Sigmoid colon (tissue), 7 donors: ENCODE measurements at regions of chr2 and their contacts with region 1.

Region 1: GRCh38 chr2:28392297-28393113 is at the start of gene FOSL2:
- DNase-seq: peak; percentile 99
- H3K4me3 ChIP-seq: peak within 1 kb of the TSS; percentile 96 to 99 (median 98)
- H3K27ac ChIP-seq: peak within 1 kb of the TSS; percentile 97 to 100 (median 100)
- H3K4me1 ChIP-seq: peaks cover 0 to 28% (median 19%) of the 10 kb centered on the region in 4 donors
- H3K27me3 ChIP-seq: no peaks in the 10 kb centered on the region
- CTCF ChIP-seq: no peak
- EP300 ChIP-seq: peak; percentile 76 to 98 (median 85)
- POLR2A ChIP-seq: peak; percentile 98 to 99
- total RNA-seq, gene FOSL2: 38.9 to 208 (median 67.3) TPM

Region 2: DNA sequence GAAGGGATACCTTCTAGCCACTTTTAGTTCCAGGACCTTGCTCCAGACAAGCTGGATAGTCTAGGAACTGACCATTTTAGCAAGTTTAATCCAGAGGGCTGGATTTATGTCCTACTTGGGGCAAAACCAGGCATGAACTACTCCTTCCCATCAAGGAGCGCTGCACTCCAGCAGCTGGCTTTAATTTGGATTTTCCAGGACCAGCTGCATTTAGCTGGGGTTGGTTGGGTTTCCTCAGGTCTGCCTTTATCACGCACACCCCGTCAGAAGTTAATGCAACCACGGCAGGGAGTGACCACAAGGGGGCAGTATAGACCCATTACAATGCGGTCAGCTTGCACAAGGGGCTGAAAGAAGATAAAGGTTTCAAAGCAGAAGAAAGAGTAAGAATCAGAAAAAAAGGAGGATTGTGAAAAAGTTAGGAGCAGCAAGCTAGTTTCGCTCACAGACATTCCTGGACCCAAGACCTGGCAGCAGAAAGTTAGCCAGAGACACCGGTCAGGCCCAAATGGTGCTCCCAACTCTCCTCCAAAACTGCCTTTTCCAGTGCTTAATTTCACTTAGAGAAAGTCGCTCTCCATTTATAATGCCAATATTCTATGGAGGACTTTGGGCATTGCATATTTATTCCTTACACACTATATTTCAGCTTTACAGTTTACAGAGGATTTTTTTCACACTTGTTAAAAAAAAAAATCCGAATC is 688.7 kb before region 1 on chr2:
- intact Hi-C with region 1: loop called (anchors 5 kb)
- DNase-seq: peak; percentile 90
- H3K4me3 ChIP-seq: no peak overlapping the region
- H3K27ac ChIP-seq: peak overlapping the region in 3 of 4 donors; percentile 80 to 88 (median 85)
- H3K4me1 ChIP-seq: peaks cover 0 to 33% (median 17%) of the 10 kb centered on the region in 4 donors
- H3K27me3 ChIP-seq: no peaks in the 10 kb centered on the region
- CTCF ChIP-seq: peak; percentile 85 to 88 (median 87)
- EP300 ChIP-seq: no peak
- POLR2A ChIP-seq: no peak

Region 3: DNA sequence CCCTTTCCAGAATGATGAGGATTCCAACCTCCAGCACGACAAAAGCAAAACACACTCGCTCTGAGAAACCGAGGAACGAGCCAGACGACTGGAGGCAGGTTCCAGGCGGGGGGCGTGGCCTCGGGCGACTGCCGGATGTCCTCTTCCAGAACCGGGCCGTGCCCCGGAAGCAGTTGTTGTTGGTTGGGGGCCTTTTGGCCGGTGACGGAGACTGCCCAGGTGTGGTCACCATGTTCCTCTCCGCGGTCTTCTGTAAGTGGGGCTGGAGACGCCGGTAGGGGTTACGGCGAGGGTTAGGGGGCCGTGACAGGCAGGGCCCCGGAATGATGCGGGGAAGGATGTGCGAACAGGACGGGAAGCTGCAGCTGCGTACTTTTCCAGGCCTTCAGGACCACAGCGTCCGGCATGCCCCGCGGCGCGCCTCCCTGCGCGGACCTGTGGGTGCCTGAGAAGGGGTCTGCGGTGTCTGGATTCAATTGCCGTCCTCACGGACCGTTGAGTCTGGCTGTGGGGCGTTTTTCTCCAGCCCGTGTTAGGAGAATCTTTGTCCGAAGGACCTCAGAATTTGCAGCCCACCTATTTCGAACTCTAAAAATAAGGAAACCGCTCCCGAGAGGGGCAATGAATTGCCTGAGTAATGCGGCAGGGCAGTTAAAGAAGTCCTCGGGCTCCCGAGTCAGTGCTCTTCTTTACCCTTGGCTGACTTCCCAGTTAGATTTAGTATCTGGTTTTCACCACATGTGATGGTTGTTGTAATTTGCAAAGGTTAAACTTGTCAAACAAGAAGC is 620.8 kb before region 1 on chr2 and contains the start of gene MRPL33:
- intact Hi-C with region 1: loop called (anchors 2 kb)
- DNase-seq: peak; percentile 98
- H3K4me3 ChIP-seq: peak within 1 kb of the TSS; percentile 58 to 91 (median 73)
- H3K27ac ChIP-seq: peak within 1 kb of the TSS; percentile 84 to 96 (median 94)
- H3K4me1 ChIP-seq: peaks cover 0 to 52% (median 45%) of the 10 kb centered on the region in 4 donors
- H3K27me3 ChIP-seq: no peaks in the 10 kb centered on the region
- CTCF ChIP-seq: no peak
- EP300 ChIP-seq: peak in 1 of 4 donors; percentile 69
- POLR2A ChIP-seq: peak; percentile 71 to 86
- total RNA-seq, gene MRPL33: 178 to 324 (median 239) TPM

Region 4: GRCh38 chr2:27890146-27890923 is 502.2 kb before region 1 on chr2 and contains the starts of genes BABAM2 and RBKS:
- intact Hi-C with region 1: loop called (anchors 1 kb)
- DNase-seq: peak; percentile 93
- H3K4me3 ChIP-seq: peak within 1 kb of the TSS; percentile 64 to 77 (median 70)
- H3K27ac ChIP-seq: peak within 1 kb of the TSS; percentile 91 to 97 (median 94)
- H3K4me1 ChIP-seq: peaks cover 0 to 28% (median 19%) of the 10 kb centered on the region in 4 donors
- H3K27me3 ChIP-seq: no peaks in the 10 kb centered on the region
- CTCF ChIP-seq: no peak
- EP300 ChIP-seq: peak in 2 of 4 donors; percentile 68 to 97
- POLR2A ChIP-seq: peak; percentile 46 to 76
- total RNA-seq, gene BABAM2: 24.4 to 52.3 (median 31.2) TPM
- total RNA-seq, gene RBKS: 0.55 to 3.1 (median 1.9) TPM

Region 5: GRCh38 chr2:27954771-27955383 is 437.6 kb before region 1 on chr2:
- intact Hi-C with region 1: loop called (anchors 5 kb)
- DNase-seq: peak; percentile 80
- H3K4me3 ChIP-seq: no peak overlapping the region
- H3K27ac ChIP-seq: peak overlapping the region; percentile 47 to 73 (median 66)
- H3K4me1 ChIP-seq: peaks cover 0 to 48% (median 34%) of the 10 kb centered on the region in 4 donors
- H3K27me3 ChIP-seq: no peaks in the 10 kb centered on the region
- CTCF ChIP-seq: peak in 2 of 4 experiments; percentile 17 to 32
- EP300 ChIP-seq: peak in 1 of 4 donors; percentile 22
- POLR2A ChIP-seq: no peak

Region 6: GRCh38 chr2:28274911-28275695 is 117.4 kb before region 1 on chr2:
- intact Hi-C with region 1: loop called (anchors 2 kb)
- DNase-seq: no peak
- H3K4me3 ChIP-seq: no peak overlapping the region
- H3K27ac ChIP-seq: peak overlapping the region; percentile 74 to 81 (median 75)
- H3K4me1 ChIP-seq: peaks cover 0 to 35% (median 24%) of the 10 kb centered on the region in 4 donors
- H3K27me3 ChIP-seq: no peaks in the 10 kb centered on the region
- CTCF ChIP-seq: no peak
- EP300 ChIP-seq: no peak
- POLR2A ChIP-seq: no peak

Region 7: DNA sequence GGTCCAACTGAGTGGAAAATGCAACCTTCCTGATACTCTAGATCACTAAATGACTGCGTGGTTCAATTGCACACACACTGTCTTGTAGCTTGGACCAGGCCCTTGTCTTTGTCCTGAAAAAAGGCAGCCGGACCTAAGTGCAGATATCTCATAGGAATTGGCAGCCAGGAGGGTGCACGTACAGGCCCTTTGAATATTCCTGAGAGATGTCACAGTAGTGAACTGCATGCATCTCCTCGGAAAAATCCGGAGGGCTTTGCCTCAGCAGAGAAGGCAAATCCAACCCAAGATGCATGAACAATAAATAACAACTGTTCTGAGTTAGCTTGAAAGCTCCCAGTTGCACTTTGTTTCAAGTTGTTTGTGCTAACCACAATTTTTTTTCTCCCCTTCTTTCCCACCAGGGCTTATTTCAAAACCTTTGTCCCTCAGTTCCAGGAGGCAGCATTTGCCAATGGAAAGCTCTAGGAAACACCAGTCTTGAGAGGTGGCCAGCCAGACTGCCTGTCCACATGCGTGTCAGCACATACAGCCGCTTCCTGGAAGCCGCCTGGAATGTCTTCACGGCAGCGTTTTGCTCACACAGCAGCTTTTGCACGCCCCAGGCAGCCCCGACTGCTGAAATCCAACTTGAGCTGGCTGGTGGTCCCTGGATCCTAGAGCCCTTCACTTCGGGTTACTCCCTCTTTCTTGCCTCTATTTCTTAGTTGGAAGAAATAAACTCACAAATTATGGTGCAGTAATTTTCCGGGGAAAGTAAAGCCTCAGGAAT is 54.3 kb before region 1 on chr2:
- intact Hi-C with region 1: loop called (anchors 2 kb)
- DNase-seq: peak; percentile 94
- H3K4me3 ChIP-seq: no peak overlapping the region
- H3K27ac ChIP-seq: peak overlapping the region; percentile 48 to 73 (median 62)
- H3K4me1 ChIP-seq: peaks cover 0 to 66% (median 50%) of the 10 kb centered on the region in 4 donors
- H3K27me3 ChIP-seq: no peaks in the 10 kb centered on the region
- CTCF ChIP-seq: no peak
- EP300 ChIP-seq: peak in 1 of 4 donors; percentile 65
- POLR2A ChIP-seq: no peak